Mammary epithelial cell (primary cell): ENCODE measurements at regions of chr2 and their contacts with region 1.

Region 1: DNA sequence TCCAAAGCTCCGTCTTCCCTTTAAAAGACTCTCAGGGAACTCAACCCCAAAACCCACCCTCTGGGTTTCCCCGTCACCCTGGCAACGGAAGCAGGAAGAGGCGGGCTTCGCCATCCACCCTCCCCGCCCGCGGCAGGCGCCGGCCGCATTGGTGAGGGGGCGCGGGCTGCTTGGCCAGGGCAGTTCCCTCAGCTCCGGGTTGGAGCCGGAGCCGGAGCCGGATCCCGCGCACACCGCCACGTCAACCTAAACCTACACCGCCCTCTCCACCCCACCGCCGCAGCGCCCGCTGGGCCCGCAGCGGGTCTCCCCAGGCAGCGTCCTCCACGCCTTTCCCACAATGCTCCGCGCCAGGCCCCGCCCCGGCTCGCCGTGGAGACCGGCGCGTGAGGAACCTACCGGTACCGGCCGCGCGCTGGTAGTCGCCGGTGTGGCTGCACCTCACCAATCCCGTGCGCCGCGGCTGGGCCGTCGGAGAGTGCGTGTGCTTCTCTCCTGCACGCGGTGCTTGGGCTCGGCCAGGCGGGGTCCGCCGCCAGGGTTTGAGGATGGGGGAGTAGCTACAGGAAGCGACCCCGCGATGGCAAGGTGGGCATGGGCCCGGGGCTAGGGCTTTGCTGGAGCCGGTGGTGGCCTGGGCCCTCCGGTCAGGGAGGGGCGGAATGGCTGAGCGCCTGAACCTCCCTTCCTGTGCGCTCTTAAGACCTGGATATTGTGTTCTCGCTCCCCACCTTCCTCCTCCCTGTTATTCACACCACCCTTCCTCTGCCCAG is at the start of gene DNAJC10:
- DNase-seq: peak; percentile 89
- H3K4me3 ChIP-seq: peak within 1 kb of the TSS; percentile 75 to 98 (median 98)
- H3K27ac ChIP-seq: peak within 1 kb of the TSS; percentile 83
- H3K4me1 ChIP-seq: peaks cover 8% of the 10 kb centered on the region
- H3K27me3 ChIP-seq: no peaks in the 10 kb centered on the region
- CTCF ChIP-seq: no peak
- total RNA-seq, gene DNAJC10: 106 to 159 TPM

Region 2: GRCh38 chr2:182186132-182186735 is 529.8 kb before region 1 on chr2:
- CTCF ChIA-PET with region 1: no interaction called
- dilution Hi-C with region 1: no loop called
- in situ Hi-C with region 1: no loop called
- intact Hi-C with region 1: loop called (anchors 5 kb)
- DNase-seq: peak; percentile 17
- H3K4me3 ChIP-seq: no peak overlapping the region
- H3K27ac ChIP-seq: no peak overlapping the region
- H3K4me1 ChIP-seq: no peaks in the 10 kb centered on the region
- H3K27me3 ChIP-seq: peaks cover 3% of the 10 kb centered on the region
- CTCF ChIP-seq: peak; percentile 61 to 64

Region 3: GRCh38 chr2:182915369-182916326 is 199.6 kb after region 1 on chr2:
- CTCF ChIA-PET with region 1: no interaction called
- dilution Hi-C with region 1: no loop called
- in situ Hi-C with region 1: no loop called
- intact Hi-C with region 1: no loop called
- DNase-seq: peak; percentile 60
- H3K4me3 ChIP-seq: no peak overlapping the region
- H3K27ac ChIP-seq: no peak overlapping the region
- H3K4me1 ChIP-seq: peaks cover 27% of the 10 kb centered on the region
- H3K27me3 ChIP-seq: no peaks in the 10 kb centered on the region
- CTCF ChIP-seq: no peak